Natural killer cell (primary cell): ENCODE measurements at regions of chrX and their contacts with region 1.

Region 1: GRCh38 chrX:79161655-79162054 is 17.2 kb downstream of the GPR174 start:
- DNase-seq: peak; percentile 23 to 86
- ATAC-seq: peak; percentile 87 to 99 (median 96)
- H3K4me3 ChIP-seq: peak overlapping the region; percentile 30
- H3K4me3 Mint-ChIP-seq: peak overlapping the region; percentile 90
- H3K27ac ChIP-seq: peak overlapping the region; percentile 91
- H3K27ac Mint-ChIP-seq: peak overlapping the region; percentile 93 to 96
- H3K4me1 ChIP-seq: peaks cover 14% of the 10 kb centered on the region
- H3K4me1 Mint-ChIP-seq: peaks cover 52 to 61% of the 10 kb centered on the region in 2 donors
- H3K27me3 ChIP-seq: no peaks in the 10 kb centered on the region
- H3K27me3 Mint-ChIP-seq: no peaks in the 10 kb centered on the region
- CTCF ChIP-seq: no peak

Region 2: DNA sequence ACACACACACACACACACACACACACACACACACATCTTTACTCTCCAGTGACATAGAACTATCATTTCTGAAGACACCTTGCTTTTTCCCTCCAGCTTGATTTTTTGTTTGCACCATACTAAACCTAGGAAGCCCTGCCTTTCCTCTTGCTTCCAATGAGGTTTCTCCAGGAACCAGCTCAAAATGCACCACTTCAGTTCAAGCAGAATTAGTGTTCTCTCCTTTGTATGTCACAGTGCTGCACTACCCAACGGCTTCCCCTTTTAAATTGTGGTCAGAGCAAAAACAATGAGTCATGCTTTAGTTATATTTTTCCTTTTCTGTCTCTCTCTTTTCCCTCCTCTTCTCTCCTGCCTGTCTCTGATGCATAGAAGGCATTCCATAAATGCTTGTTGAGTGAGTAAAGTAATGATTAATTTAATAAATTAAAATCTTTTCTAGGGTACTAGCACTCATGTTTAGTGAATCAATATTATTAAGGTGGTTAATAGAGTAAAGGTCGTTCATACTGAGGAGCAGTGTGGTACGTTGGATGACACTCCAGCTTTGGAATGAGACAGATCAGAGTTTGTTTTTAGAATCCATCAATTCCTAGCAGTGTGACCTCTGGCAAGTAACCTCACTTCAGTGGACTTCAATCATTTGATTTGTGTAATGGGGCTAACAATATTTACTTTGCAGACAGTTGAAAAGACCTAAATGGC is 508.4 kb before region 1 on chrX:
- intact Hi-C with region 1: loop called (anchors 5 kb)
- DNase-seq: peak in 1 of 2 donors; percentile 9
- ATAC-seq: peak; percentile 30 to 49 (median 48)
- H3K4me3 ChIP-seq: no peak overlapping the region
- H3K4me3 Mint-ChIP-seq: no peak overlapping the region
- H3K27ac ChIP-seq: no peak overlapping the region
- H3K27ac Mint-ChIP-seq: no peak overlapping the region
- H3K4me1 ChIP-seq: peaks cover 9% of the 10 kb centered on the region
- H3K4me1 Mint-ChIP-seq: peaks cover 23 to 30% of the 10 kb centered on the region in 2 donors
- H3K27me3 ChIP-seq: no peaks in the 10 kb centered on the region
- H3K27me3 Mint-ChIP-seq: peaks cover 6 to 20% of the 10 kb centered on the region in 2 donors
- CTCF ChIP-seq: no peak

Region 3: DNA sequence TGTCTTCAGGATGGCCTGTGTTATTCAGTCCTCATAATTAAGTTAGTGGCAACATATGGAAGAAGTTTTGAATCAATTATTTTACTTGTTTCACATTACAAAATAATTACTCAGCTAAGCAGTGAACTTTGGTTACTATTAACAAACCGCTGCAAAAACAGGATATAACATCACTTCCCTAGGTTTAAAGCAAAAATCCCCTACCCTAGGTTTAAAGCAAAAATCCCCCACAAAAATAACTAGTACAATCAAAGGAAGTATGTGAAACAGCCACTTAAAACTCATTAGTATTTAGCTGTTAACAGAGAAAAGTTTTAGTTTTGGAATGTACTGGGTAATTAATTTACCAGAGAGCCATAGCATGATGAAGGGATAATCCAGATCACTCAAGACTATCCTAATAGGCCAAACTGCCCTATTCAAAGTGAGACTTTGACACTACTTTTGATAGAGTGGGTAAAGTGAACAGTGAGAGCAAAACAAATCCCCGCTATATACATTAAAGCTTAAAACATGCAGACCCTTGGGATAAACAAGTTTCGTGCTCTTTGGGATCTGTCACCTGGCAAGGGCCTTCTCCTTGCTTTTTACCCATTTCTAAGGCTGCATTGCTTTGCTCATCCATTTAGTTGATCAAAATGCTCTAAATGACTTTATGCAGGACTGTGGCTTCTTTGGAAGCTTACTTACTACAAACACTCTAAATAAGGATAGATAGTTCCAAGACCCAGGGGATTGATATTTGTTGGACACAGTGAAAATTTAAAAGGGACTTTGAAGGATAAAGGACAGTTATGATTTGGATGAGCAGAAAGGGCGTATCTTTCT is 53.5 kb before region 1 on chrX:
- intact Hi-C with region 1: loop called (anchors 5 kb)
- DNase-seq: peak in 1 of 2 donors; percentile 78
- ATAC-seq: peak; percentile 89 to 94 (median 92)
- H3K4me3 ChIP-seq: no peak overlapping the region
- H3K4me3 Mint-ChIP-seq: peak overlapping the region; percentile 62
- H3K27ac ChIP-seq: peak overlapping the region; percentile 100
- H3K27ac Mint-ChIP-seq: peak overlapping the region; percentile 88 to 96
- H3K4me1 ChIP-seq: peaks cover 5% of the 10 kb centered on the region
- H3K4me1 Mint-ChIP-seq: peaks cover 29 to 36% of the 10 kb centered on the region in 2 donors
- H3K27me3 ChIP-seq: no peaks in the 10 kb centered on the region
- H3K27me3 Mint-ChIP-seq: peaks cover 0 to 8% of the 10 kb centered on the region in 2 donors
- CTCF ChIP-seq: no peak

Region 4: DNA sequence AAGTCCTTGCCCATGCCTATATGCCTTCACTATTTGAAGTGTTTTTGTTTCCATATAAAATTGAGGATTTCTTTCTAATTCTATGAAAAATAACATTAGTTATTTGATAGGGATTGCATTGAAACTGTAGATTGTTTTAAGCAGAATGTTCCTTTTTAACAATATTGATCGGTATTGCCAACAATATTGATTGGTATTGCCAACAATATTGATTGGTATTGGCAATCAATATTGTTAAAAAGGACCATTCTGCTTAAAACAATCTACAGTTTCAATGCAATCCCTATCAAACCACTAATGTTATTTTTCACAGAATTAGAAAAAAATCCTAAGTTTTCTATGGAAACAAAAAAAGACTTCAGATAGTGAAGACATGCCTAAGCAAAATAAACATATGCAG is 39.6 kb before region 1 on chrX:
- intact Hi-C with region 1: no loop called
- DNase-seq: no peak
- ATAC-seq: no peak
- H3K4me3 ChIP-seq: no peak overlapping the region
- H3K4me3 Mint-ChIP-seq: no peak overlapping the region
- H3K27ac ChIP-seq: no peak overlapping the region
- H3K27ac Mint-ChIP-seq: no peak overlapping the region
- H3K4me1 ChIP-seq: no peaks in the 10 kb centered on the region
- H3K4me1 Mint-ChIP-seq: peaks cover 0 to 2% of the 10 kb centered on the region in 2 donors
- H3K27me3 ChIP-seq: no peaks in the 10 kb centered on the region
- H3K27me3 Mint-ChIP-seq: peaks cover 0 to 22% of the 10 kb centered on the region in 2 donors
- CTCF ChIP-seq: no peak